Activated CD4-positive, alpha-beta T cell treated with anti-CD3 and anti-CD28 coated beads, Interleukin-2, amount 10 ng/mL, durations not matched to agents 24 days and 14 days (primary cell): ENCODE measurements at regions of chr14 and their contacts with region 1.

Region 1: GRCh38 chr14:49767562-49768300 is at the start of gene KLHDC2:
- DNase-seq: peak; percentile 98
- H3K4me3 Mint-ChIP-seq: peak within 1 kb of the TSS; percentile 97
- H3K27ac Mint-ChIP-seq: peak within 1 kb of the TSS; percentile 100
- H3K4me1 Mint-ChIP-seq: peaks cover 31% of the 10 kb centered on the region
- H3K27me3 Mint-ChIP-seq: no peaks in the 10 kb centered on the region
- total RNA-seq, gene KLHDC2: 24.6 and 28.0 TPM in 2 replicates

Region 2: GRCh38 chr14:49620182-49621113 is 147.3 kb before region 1 on chr14 and contains the starts of genes MGAT2 and RPL36AL:
- intact Hi-C with region 1: loop called (anchors 1 kb)
- DNase-seq: peak; percentile 99
- H3K4me3 Mint-ChIP-seq: peak within 1 kb of the TSS; percentile 96
- H3K27ac Mint-ChIP-seq: peak within 1 kb of the TSS; percentile 96
- H3K4me1 Mint-ChIP-seq: peaks cover 36% of the 10 kb centered on the region
- H3K27me3 Mint-ChIP-seq: no peaks in the 10 kb centered on the region
- total RNA-seq, gene MGAT2: 45.6 and 48.5 TPM in 2 replicates
- total RNA-seq, gene RPL36AL: 221 and 229 TPM in 2 replicates

Region 3: GRCh38 chr14:49852301-49853157 is 84.8 kb after region 1 on chr14 and contains the start of gene NEMF:
- intact Hi-C with region 1: loop called (anchors 2 kb)
- DNase-seq: peak; percentile 96
- H3K4me3 Mint-ChIP-seq: peak within 1 kb of the TSS; percentile 93
- H3K27ac Mint-ChIP-seq: peak within 1 kb of the TSS; percentile 98
- H3K4me1 Mint-ChIP-seq: peaks cover 34% of the 10 kb centered on the region
- H3K27me3 Mint-ChIP-seq: no peaks in the 10 kb centered on the region
- total RNA-seq, gene NEMF: 65.8 and 75.4 TPM in 2 replicates

Region 4: GRCh38 chr14:50311975-50312733 is 544.4 kb after region 1 on chr14 and contains the starts of genes DMAC2L and L2HGDH:
- intact Hi-C with region 1: loop called (anchors 1 kb)
- DNase-seq: peak; percentile 98
- H3K4me3 Mint-ChIP-seq: peak within 1 kb of the TSS; percentile 96
- H3K27ac Mint-ChIP-seq: peak within 1 kb of the TSS; percentile 99
- H3K4me1 Mint-ChIP-seq: peaks cover 39% of the 10 kb centered on the region
- H3K27me3 Mint-ChIP-seq: no peaks in the 10 kb centered on the region
- total RNA-seq, gene DMAC2L: 16.3 and 18.8 TPM in 2 replicates
- total RNA-seq, gene L2HGDH: 16.8 and 18.0 TPM in 2 replicates